Right cardiac atrium (tissue), 5 donors: ENCODE measurements at regions of chr10 and their contacts with region 1.

Region 1: DNA sequence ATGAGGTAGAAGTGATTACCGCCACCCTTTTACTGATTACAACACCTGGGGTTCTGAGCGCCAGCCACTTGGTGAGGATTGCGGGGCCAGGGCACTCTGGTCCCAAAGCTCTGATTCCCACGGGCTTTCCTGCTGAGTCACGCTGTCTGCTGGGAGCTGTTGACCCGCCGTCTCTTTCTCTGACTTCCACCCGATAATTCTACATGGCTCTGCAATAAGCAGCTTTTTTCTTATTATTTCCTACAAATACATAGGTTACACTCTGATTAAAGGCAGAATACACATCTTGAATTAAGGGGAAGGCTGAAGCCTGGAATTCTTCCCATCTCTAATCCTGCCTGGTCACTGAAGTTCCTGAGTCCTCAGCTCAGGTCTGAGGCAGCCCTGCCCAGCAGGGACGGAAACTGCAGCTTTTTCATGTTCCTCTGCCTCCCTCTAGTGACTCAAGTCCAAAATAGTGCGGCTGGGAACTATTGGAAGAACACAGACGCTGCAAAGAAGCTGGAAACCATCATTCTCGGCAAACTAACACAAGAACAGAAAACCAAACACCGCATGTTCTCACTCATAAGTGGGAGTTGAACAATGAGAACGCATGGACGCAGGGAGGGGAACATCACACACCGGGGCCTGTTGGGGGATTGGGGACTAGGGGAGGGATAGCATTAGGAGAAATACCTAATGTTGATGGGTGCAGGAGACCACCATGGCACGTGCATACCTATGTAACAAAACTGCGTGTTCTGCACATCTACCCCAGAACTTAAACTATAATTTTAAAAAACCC is 178.3 kb downstream of the PRKCQ start:
- DNase-seq: peak; percentile 72 to 86 (median 81)
- ATAC-seq: peak; percentile 95 to 96
- H3K4me3 ChIP-seq: peak overlapping the region; percentile 72
- H3K27ac ChIP-seq: no peak overlapping the region
- H3K4me1 ChIP-seq: no peaks in the 10 kb centered on the region
- H3K27me3 ChIP-seq: no peaks in the 10 kb centered on the region

Region 2: GRCh38 chr10:6108603-6109443 is 292.9 kb before region 1 on chr10:
- intact Hi-C with region 1: loop called (anchors 2 to 5 kb)
- DNase-seq: no peak
- ATAC-seq: peak in 1 of 2 donors; percentile 28
- H3K4me3 ChIP-seq: no peak overlapping the region
- H3K27ac ChIP-seq: no peak overlapping the region
- H3K4me1 ChIP-seq: no peaks in the 10 kb centered on the region
- H3K27me3 ChIP-seq: no peaks in the 10 kb centered on the region

Region 3: GRCh38 chr10:6114805-6115341 is 286.9 kb before region 1 on chr10:
- intact Hi-C with region 1: loop called in 2 of 4 experiments (anchors 5 kb)
- DNase-seq: peak in 1 of 3 donors; percentile 64
- ATAC-seq: no peak
- H3K4me3 ChIP-seq: no peak overlapping the region
- H3K27ac ChIP-seq: peak overlapping the region; percentile 56
- H3K4me1 ChIP-seq: peaks cover 5% of the 10 kb centered on the region
- H3K27me3 ChIP-seq: no peaks in the 10 kb centered on the region

Region 4: GRCh38 chr10:6202684-6203330 is 198.9 kb before region 1 on chr10 and contains the start of gene PFKFB3:
- intact Hi-C with region 1: loop called in 3 of 4 experiments (anchors 2 to 5 kb)
- DNase-seq: peak; percentile 96 to 99 (median 98)
- ATAC-seq: peak; percentile 96
- H3K4me3 ChIP-seq: peak within 1 kb of the TSS; percentile 63
- H3K27ac ChIP-seq: peak within 1 kb of the TSS; percentile 53
- H3K4me1 ChIP-seq: peaks cover 9% of the 10 kb centered on the region
- H3K27me3 ChIP-seq: no peaks in the 10 kb centered on the region
- total RNA-seq, gene PFKFB3: 10.5 to 15.1 (median 11.7) TPM